Right lobe of liver (tissue), 6 donors: ENCODE measurements at regions of chr22 and their contacts with region 1.

Region 1: DNA sequence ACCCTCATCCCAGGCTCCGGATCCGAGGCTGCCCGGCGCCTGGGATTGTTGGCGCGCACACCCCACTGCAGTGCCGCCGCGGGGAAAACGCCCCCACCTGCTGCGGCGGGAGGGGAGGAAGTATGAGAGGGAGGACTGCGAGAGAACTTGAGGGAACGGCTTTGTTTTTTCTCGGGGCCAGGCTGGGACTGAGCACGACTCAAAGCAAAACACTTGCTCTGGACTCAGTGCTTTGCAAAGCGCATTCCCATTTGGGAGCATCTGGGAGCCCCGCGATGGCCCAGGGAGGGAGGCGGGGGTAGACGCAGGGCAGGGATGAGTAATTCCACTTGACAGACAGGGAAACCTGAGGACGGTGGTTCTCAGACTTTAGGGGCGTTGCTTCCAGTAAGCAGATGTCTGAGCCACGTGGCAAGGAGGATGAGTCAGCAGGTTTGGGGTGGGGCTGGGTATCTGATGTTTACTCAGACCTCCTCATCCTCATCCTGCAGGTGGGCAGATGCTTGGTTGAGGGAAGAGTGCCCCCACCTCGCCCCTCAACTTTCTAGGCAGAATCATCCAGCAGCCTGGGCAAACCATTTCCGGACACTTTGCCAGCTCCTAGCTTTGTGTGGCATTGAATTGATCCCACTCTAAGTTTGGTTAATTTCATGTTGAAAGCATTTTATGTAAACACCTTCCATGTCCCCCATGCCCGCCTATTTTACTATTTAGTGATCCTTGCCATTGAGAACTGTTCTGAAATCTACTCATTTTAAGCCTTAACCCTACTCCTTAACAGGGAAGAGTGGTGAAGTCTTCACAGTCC is 1.5 kb downstream of the MIAT start:
- DNase-seq: peak in 1 of 3 donors; percentile 58
- ATAC-seq: peak; percentile 38 to 75 (median 48)
- H3K4me3 ChIP-seq: peak overlapping the region in 1 of 3 donors; percentile 20
- H3K27ac ChIP-seq: no peak overlapping the region
- H3K4me1 ChIP-seq: peaks cover 0 to 5% (median 0%) of the 10 kb centered on the region in 4 donors
- H3K27me3 ChIP-seq: peaks cover 9 to 25% of the 10 kb centered on the region in 2 donors
- CTCF ChIP-seq: no peak
- POLR2A ChIP-seq: no peak

Region 2: GRCh38 chr22:26377170-26377830 is 281.6 kb before region 1 on chr22:
- intact Hi-C with region 1: loop called in 1 of 2 experiments (anchors 10 kb)
- DNase-seq: no peak
- ATAC-seq: no peak
- H3K4me3 ChIP-seq: no peak overlapping the region
- H3K27ac ChIP-seq: no peak overlapping the region
- H3K4me1 ChIP-seq: no peaks in the 10 kb centered on the region
- H3K27me3 ChIP-seq: no peaks in the 10 kb centered on the region
- CTCF ChIP-seq: no peak
- POLR2A ChIP-seq: no peak